Activated CD4-positive, alpha-beta memory T cell treated with anti-CD3 and anti-CD28 coated beads, Interleukin-2, amount 10 ng/mL, durations not matched to agents 7 days and 5 days (primary cell): ENCODE measurements at regions of chr11 and their contacts with region 1.

Region 1: DNA sequence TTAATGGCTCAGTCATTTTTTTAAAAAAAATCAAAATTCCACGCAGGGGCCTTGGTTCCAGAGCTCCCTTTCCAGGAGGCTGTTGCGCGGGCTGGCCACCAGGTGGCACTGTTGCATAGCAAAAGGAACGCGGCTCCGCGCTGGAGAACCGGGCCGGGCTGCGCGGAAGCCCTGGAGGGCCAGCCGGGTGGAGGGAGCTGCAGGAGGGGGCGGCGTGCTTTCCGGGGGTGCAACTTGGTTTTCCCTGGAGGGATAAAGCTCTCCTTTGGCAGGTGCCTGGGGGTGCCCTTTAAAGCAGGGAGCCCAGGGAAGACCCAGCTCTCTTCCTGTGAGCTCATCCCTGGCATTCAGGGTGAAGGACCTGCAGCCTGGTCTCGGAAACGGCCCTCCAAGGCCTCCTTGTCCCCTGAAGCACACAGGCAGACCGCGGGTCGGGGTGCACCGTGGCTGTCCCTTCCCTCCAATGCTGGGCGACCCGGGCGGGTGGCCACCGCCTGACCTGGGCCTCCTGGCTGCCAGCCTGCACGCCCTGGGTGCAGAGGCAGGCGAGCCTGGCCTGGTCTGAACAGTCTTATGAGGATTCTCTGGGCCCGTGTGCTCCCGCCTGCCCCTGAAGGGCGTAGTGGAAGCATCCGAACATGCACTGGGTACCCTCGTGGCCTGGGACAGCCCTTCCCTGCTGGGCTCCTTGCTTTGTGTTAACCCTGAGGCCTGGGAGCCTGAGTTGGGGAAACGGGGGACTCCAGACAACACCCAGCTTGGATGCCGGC is 23.4 kb downstream of the KRTAP5-5 start:
- DNase-seq: peak; percentile 77
- H3K4me3 Mint-ChIP-seq: no peak overlapping the region
- H3K27ac Mint-ChIP-seq: no peak overlapping the region
- H3K4me1 Mint-ChIP-seq: no peaks in the 10 kb centered on the region
- H3K27me3 Mint-ChIP-seq: peaks cover 13% of the 10 kb centered on the region

Region 2: DNA sequence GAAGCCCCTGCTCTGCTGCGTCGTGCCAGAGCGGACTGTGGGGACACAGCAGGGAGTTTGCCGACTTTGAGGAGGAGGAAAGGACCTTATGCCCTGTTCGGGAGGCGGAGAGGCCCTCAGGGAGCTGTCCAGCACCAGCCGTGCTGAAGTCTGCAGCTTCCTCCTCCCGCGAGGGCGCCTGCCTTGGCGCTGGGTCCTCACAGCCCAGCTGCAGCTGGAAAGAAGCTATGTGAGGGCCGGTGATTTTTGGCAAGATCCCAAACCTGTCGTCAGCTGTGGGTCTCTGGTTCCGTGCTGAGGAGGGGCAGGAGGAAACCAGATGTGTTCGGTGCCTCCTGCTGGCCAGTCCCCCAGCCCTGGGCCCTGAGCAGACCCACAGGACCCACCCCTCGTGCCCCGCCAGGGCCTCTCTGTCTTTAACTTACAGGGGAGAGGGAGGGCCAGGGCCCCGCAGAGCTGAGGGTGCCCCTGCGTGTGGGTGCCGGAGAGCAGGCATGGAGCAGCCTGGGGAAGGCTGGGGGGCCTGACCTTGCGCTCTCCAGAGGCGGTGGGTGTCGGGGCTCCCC is 251.2 kb before region 1 on chr11:
- CTCF ChIA-PET with region 1: no interaction called
- POLR2A ChIA-PET with region 1: no interaction called
- DNase-seq: peak; percentile 54
- H3K4me3 Mint-ChIP-seq: no peak overlapping the region
- H3K27ac Mint-ChIP-seq: no peak overlapping the region
- H3K4me1 Mint-ChIP-seq: no peaks in the 10 kb centered on the region
- H3K27me3 Mint-ChIP-seq: no peaks in the 10 kb centered on the region

Region 3: GRCh38 chr11:1586699-1587098 is 66.3 kb before region 1 on chr11:
- CTCF ChIA-PET with region 1: no interaction called
- POLR2A ChIA-PET with region 1: no interaction called
- DNase-seq: no peak
- H3K4me3 Mint-ChIP-seq: no peak overlapping the region
- H3K27ac Mint-ChIP-seq: no peak overlapping the region
- H3K4me1 Mint-ChIP-seq: peaks cover 27% of the 10 kb centered on the region
- H3K27me3 Mint-ChIP-seq: peaks cover 3% of the 10 kb centered on the region

Region 4: GRCh38 chr11:1640076-1640946 is 12.6 kb before region 1 on chr11:
- CTCF ChIA-PET with region 1: interaction called, 24 read pairs
- POLR2A ChIA-PET with region 1: interaction called, 3 read pairs
- DNase-seq: peak; percentile 24
- H3K4me3 Mint-ChIP-seq: no peak overlapping the region
- H3K27ac Mint-ChIP-seq: no peak overlapping the region
- H3K4me1 Mint-ChIP-seq: no peaks in the 10 kb centered on the region
- H3K27me3 Mint-ChIP-seq: peaks cover 9% of the 10 kb centered on the region

Region 5: GRCh38 chr11:1674173-1675131 is 21.5 kb after region 1 on chr11:
- CTCF ChIA-PET with region 1: interaction called, 13 read pairs
- POLR2A ChIA-PET with region 1: no interaction called
- DNase-seq: no peak
- H3K4me3 Mint-ChIP-seq: no peak overlapping the region
- H3K27ac Mint-ChIP-seq: no peak overlapping the region
- H3K4me1 Mint-ChIP-seq: no peaks in the 10 kb centered on the region
- H3K27me3 Mint-ChIP-seq: peaks cover 35% of the 10 kb centered on the region

Region 6: GRCh38 chr11:1701091-1701807 is 48.3 kb after region 1 on chr11:
- CTCF ChIA-PET with region 1: interaction called, 12 read pairs
- POLR2A ChIA-PET with region 1: no interaction called
- DNase-seq: no peak
- H3K4me3 Mint-ChIP-seq: no peak overlapping the region
- H3K27ac Mint-ChIP-seq: no peak overlapping the region
- H3K4me1 Mint-ChIP-seq: peaks cover 8% of the 10 kb centered on the region
- H3K27me3 Mint-ChIP-seq: peaks cover 18% of the 10 kb centered on the region

Region 7: DNA sequence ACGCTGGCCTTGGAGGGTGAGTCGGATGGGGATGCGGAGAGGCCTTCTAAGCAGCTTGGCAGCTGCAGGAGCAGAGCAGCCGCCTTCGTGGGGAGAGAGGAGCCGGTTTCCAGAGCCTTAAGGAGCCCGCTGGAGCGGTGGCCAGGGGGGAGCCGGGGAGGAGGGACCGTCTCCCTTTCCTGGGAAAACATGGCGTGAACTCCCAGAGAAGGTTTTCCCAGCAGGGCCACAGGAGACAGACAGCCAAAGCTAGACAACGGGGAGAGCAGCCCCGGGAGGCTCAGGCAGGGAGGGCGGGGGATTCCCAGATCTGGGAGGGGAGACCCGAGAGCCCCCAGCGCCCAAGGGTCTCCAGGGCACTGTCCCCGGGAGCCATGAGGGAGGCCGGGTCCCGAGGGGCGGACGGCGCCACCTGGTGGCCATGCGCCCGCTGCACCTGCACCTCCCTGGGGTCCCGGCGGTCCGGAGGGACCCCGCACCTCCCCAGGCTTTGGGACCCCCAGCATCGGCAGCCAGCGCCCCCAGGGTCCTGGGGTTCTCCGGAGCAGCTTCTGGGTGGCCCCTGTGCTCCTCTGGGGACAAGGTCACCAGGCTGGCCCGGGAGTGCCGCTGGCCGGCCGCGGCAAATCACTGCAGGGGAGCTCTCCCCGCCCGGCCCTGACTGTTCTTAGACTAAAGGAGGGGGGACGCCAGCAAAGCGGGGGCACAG is 179.4 kb after region 1 on chr11:
- CTCF ChIA-PET with region 1: interaction called, 68 read pairs
- POLR2A ChIA-PET with region 1: interaction called, 3 read pairs
- DNase-seq: peak; percentile 65
- H3K4me3 Mint-ChIP-seq: no peak overlapping the region
- H3K27ac Mint-ChIP-seq: no peak overlapping the region
- H3K4me1 Mint-ChIP-seq: no peaks in the 10 kb centered on the region
- H3K27me3 Mint-ChIP-seq: peaks cover 5% of the 10 kb centered on the region